ENCODE measurements at regions of chr12 and their contacts with region 1.

Region 1: DNA sequence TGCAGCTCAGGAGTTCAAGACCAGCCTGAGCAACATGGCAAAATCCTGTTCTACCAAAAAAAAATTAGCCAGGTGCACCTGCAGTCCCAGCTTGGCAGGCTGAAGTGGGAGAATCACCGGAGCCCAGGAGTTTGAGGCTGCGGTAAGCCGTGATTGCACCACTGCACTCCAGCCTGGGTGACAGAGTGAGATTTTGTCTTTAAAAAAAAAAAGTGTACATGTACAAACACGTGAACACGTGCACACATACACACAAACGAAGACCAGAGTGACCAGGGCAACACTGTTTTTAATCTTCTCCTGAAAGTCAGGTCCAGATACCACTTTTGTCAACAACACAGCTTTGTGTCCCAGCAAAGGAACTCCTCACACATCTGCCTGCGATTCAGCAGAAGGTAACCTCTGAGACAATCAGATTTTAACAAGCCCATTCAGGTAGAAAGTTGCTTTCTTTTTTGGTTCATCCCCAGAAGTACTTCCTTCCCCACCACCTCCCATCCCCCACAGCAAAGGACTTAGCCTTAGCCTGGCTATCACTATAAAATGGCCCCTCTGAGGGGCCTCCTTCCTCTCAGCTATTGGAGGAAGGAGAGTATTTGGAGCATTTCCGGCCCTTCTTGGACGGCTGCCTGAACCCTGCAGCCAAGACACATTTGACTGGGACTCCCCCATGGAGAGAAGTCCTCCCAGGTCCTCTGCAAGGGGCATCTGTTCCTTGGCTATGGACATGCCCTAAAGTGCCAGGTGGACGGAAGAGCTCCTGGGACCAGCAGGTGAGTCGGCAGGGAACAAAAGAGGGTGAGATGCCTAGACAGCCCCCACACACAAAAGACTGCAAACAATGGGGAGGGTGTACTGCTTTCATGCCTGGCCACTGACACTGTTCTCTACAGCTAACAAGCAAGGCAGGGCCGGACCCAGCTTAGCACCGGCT is 9.8 kb downstream of the CTDSP2 start:
- DNase-seq: peak; percentile 47
- ATAC-seq: peak; percentile 59
- H3K4me3 Mint-ChIP-seq: peak overlapping the region; percentile 47
- H3K27ac Mint-ChIP-seq: peak overlapping the region; percentile 97
- H3K4me1 Mint-ChIP-seq: peaks cover 95% of the 10 kb centered on the region
- H3K27me3 Mint-ChIP-seq: no peaks in the 10 kb centered on the region
- CTCF ChIP-seq: no peak

Region 2: GRCh38 chr12:57803319-57803893 is 33.3 kb before region 1 on chr12:
- CTCF ChIA-PET with region 1: interaction called, 12 read pairs
- POLR2A ChIA-PET with region 1: interaction called, 5 read pairs
- DNase-seq: peak; percentile 75
- ATAC-seq: peak; percentile 98
- H3K4me3 Mint-ChIP-seq: no peak overlapping the region
- H3K27ac Mint-ChIP-seq: no peak overlapping the region
- H3K4me1 Mint-ChIP-seq: no peaks in the 10 kb centered on the region
- H3K27me3 Mint-ChIP-seq: no peaks in the 10 kb centered on the region
- CTCF ChIP-seq: peak; percentile 49; the same call in 1 of the 2 replicates

Region 3: DNA sequence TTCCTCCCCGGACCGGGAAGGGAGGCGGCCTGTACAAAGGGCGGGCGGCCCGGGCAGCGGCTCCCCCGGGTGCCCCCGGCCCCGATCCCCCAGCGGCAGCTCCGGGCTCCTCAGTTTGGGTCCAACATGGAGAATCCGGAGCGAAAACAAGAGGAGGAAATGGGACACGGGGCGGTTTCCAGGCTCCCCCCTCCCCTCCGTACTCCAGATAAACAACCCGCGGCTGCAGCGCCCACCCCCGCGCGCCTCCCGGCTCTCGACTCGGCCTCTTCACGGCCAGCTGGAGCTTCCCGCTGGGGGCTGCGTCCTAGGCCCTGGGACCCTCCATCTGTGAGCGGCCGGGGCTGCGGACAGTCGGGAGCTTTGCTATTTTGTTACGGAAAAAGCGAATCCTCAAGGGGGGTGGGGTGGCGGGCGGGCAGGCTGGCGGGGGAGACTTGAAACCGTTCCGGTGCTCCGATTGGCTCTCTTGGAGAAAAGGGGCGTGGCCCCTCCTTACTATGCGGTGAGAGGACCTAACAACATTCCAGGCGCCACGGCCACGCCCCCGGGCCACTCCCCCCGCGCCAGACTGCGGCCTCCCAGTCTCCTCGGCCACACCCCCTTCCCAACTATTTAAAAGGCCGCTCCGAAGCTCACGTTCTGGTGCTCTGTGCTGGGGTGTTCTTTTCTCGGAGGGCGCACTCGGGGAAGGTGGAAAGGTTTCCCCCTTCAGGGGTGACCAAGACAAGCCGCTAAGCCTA is 10.0 kb after region 1 on chr12 and contains the start of gene CTDSP2:
- CTCF ChIA-PET with region 1: interaction called, 27 read pairs
- POLR2A ChIA-PET with region 1: interaction called, 134 read pairs
- DNase-seq: peak; percentile 100
- ATAC-seq: peak; percentile 65
- H3K4me3 Mint-ChIP-seq: peak within 1 kb of the TSS; percentile 69
- H3K27ac Mint-ChIP-seq: peak within 1 kb of the TSS; percentile 95
- H3K4me1 Mint-ChIP-seq: peaks cover 51% of the 10 kb centered on the region
- H3K27me3 Mint-ChIP-seq: peaks cover 14% of the 10 kb centered on the region
- CTCF ChIP-seq: no peak
- total RNA-seq, gene CTDSP2: 97.0 to 122 TPM (median 101 TPM) in 3 replicates

Region 4: GRCh38 chr12:57852620-57853500 is 16.2 kb after region 1 on chr12:
- CTCF ChIA-PET with region 1: interaction called, 27 read pairs
- POLR2A ChIA-PET with region 1: interaction called, 134 read pairs
- DNase-seq: peak; percentile 83
- ATAC-seq: peak; percentile 82
- H3K4me3 Mint-ChIP-seq: peak overlapping the region; percentile 66
- H3K27ac Mint-ChIP-seq: peak overlapping the region; percentile 91
- H3K4me1 Mint-ChIP-seq: peaks cover 40% of the 10 kb centered on the region
- H3K27me3 Mint-ChIP-seq: peaks cover 25% of the 10 kb centered on the region
- CTCF ChIP-seq: no peak

Region 5: DNA sequence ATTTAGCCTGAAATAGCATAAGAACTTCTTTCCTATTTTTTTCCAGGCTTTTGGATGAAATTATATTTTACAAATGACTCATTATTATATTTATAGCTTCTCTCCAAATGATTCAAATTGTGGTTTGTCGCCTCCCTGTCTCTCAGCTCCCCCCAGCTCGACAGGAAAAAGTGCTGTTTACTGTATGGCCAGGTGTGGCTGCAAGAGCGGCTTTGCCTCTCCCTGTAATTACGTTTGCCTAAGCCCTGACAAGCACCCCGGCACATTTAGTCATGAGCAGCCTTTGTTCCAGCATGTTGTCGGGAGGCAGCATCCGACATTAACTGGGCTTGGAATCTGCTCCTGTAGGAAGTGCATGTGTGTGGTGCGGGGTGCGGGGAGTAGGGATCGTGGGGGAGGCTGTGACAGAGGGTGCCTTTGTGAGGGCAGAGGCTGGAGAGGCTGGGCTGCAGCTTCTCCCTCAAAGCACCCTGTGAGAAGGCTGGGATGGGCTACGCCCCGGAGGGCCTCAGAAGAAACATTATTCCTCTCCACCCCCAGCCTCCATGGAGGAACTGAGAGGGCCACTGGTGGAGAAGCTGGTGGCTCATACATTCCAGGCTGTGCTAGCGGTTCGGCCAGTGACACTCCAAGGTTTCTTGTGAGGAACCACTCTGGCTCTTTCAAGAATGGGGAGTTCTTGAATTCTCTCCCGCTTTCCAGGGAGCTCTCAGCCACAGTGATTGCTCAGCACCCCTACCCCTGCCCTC is 51.9 kb after region 1 on chr12:
- CTCF ChIA-PET with region 1: interaction called, 77 read pairs
- POLR2A ChIA-PET with region 1: interaction called, 64 read pairs
- DNase-seq: peak; percentile 34
- ATAC-seq: peak; percentile 73
- H3K4me3 Mint-ChIP-seq: peak overlapping the region; percentile 48
- H3K27ac Mint-ChIP-seq: peak overlapping the region; percentile 13; the same call in 1 of the 2 replicates
- H3K4me1 Mint-ChIP-seq: peaks cover 28% of the 10 kb centered on the region
- H3K27me3 Mint-ChIP-seq: no peaks in the 10 kb centered on the region; the same call in none of the 2 replicates
- CTCF ChIP-seq: no peak

Region 6: DNA sequence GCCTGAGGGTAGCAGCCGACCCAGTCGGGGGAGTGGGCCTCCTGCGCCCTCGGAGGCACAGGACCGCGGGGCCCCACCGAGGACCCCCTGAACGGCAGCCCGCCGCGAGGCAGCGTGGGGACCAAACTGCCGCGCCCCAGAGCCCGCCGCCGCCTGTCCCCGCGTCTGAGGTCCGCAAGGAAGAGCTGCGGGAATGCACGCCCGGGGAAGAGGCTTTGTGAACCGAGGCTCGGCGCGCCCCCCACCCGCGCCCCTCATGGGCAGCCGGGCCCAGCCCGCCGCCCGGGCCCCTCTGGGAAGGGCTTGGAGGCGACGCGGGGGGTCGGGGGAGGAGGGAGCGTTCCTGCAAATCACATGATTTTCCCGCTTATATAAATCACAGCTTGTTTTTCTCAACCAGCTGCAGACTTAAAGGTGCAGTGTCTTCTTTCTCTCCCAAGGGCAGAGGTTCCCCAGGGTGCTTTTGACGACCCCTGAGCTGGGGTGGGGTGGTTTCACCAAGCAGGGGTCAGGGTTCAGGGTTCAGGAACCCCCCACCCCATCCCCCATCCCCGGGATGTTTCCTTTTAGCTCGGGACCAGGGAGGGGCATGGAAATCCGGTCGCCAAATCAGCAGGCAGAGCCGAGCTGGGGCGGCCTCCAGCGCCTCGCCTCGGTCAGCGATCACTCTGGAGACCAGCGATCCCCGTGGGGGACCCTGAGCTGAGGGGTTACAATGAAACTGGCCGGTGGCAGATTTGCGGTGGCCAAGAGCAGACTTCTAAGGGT is 59.9 kb after region 1 on chr12:
- CTCF ChIA-PET with region 1: interaction called, 77 read pairs
- POLR2A ChIA-PET with region 1: interaction called, 64 read pairs
- DNase-seq: peak; percentile 70
- ATAC-seq: peak; percentile 82
- H3K4me3 Mint-ChIP-seq: peak overlapping the region; percentile 78
- H3K27ac Mint-ChIP-seq: peak overlapping the region; percentile 69
- H3K4me1 Mint-ChIP-seq: peaks cover 46% of the 10 kb centered on the region
- H3K27me3 Mint-ChIP-seq: peaks cover 32% of the 10 kb centered on the region
- CTCF ChIP-seq: no peak

Region 7: GRCh38 chr12:57904848-57905811 is 68.4 kb after region 1 on chr12:
- CTCF ChIA-PET with region 1: interaction called, 16 read pairs
- POLR2A ChIA-PET with region 1: no interaction called
- DNase-seq: peak; percentile 89
- ATAC-seq: peak; percentile 94
- H3K4me3 Mint-ChIP-seq: no peak overlapping the region; the same call in 1 of the 2 replicates
- H3K27ac Mint-ChIP-seq: no peak overlapping the region
- H3K4me1 Mint-ChIP-seq: peaks cover 5% of the 10 kb centered on the region
- H3K27me3 Mint-ChIP-seq: peaks cover 14% of the 10 kb centered on the region
- CTCF ChIP-seq: peak; percentile 100

Region 8: DNA sequence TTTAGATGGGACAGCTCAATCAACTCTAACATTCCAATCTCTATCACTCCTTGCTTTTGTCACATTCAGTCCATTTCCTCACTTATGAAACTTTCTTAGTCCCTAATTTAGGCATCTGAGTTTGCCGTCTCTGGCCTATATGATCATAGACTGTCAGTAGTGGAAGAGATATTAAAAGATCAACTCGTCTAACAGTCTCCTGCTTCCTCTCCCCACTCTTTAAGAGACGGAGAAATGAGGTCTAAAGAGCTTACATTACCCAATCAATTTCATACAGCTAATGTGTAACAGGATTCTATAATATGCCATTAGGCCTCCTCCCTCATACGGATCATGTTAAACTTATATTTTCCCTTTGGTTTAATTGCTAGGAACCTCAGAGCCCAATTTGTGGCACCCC is 98.1 kb after region 1 on chr12:
- CTCF ChIA-PET with region 1: no interaction called
- POLR2A ChIA-PET with region 1: no interaction called
- DNase-seq: no peak
- ATAC-seq: no peak
- H3K4me3 Mint-ChIP-seq: no peak overlapping the region
- H3K27ac Mint-ChIP-seq: no peak overlapping the region
- H3K4me1 Mint-ChIP-seq: no peaks in the 10 kb centered on the region
- H3K27me3 Mint-ChIP-seq: peaks cover 55% of the 10 kb centered on the region
- CTCF ChIP-seq: no peak

Measured in WTC11 (cell line).